AG04450 (cell line): ENCODE measurements at regions of chr11 and their contacts with region 1.

Region 1: DNA sequence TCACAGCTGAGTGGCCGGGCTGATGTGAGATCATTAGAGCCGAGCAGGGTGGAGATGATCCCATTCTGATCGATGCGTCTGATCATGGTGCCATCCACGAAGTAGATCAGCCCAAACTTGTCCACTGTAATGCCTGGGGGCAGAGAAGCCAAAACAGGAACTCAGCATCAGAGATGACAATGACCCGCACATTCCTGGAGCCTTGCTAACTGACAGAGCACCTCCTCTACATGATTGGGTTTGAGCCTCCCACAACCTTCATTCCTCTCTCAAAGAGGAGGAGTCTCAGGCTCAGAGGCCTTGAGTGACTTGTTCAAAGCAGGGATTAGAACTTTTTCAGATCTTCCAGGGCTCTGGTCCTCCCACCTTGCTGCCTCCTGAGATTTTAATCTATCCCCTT is 133.7 kb upstream of the NARS2 start:
- DNase-seq: no peak
- H3K4me3 ChIP-seq: no peak overlapping the region
- H3K27ac ChIP-seq: no peak overlapping the region
- H3K27me3 ChIP-seq: no peaks in the 10 kb centered on the region
- CTCF ChIP-seq: no peak

Region 2: DNA sequence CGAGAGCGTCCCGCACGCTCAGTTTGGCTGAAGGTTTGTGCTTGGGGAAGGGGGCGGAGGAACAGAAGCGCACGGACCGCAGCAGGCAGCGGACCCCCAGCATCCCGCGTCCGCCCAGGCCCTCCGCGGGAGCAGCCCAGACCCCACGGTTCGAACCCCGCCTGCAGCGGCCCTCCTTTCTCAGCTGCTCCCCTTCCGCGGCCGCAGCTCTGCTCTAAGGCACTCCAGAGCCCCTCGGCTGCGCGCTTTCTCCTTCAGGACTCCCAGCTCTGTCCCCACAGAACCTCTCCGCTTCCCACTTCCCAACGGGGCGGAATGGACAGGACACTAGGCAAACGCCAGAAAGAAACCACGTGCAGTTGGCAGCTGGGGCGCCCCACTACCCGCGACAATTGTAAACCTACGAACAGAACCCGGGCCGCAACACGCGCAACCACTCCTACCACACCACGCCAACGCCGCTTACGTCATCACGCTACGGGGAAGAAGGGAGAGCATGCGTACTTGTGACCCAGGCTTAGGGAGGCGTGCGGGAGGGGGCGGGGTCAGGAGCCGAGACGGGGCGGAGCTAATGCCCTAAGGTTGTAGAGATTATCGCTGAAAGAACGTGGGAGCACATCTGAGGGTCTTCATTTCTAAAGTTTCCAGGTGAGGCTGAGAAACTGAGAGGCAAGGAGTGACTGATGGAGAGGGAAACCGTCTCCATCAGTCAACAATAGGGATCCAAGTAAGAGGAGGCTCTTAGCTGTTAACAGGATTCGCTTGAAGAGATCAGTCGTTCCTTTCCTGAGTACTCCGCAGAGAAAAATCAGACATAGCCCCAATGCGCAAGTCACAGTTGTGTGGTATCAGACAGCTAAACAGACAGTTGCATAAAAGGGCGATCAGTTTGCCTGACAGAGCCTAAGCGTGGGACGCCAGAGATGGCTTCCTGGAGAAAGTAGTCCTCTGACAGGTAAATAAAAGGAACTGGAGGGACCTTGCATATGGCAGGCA is 133.7 kb before region 1 on chr11 and contains the start of gene NARS2:
- CTCF ChIA-PET with region 1: no interaction called
- POLR2A ChIA-PET with region 1: no interaction called
- DNase-seq: peak; percentile 84
- H3K4me3 ChIP-seq: peak within 1 kb of the TSS; percentile 87
- H3K27ac ChIP-seq: peak within 1 kb of the TSS; percentile 88
- H3K27me3 ChIP-seq: peaks cover 3% of the 10 kb centered on the region
- CTCF ChIP-seq: no peak
- polyA plus RNA-seq, gene NARS2: 10.6 and 18.4 TPM in 2 replicates

Region 3: DNA sequence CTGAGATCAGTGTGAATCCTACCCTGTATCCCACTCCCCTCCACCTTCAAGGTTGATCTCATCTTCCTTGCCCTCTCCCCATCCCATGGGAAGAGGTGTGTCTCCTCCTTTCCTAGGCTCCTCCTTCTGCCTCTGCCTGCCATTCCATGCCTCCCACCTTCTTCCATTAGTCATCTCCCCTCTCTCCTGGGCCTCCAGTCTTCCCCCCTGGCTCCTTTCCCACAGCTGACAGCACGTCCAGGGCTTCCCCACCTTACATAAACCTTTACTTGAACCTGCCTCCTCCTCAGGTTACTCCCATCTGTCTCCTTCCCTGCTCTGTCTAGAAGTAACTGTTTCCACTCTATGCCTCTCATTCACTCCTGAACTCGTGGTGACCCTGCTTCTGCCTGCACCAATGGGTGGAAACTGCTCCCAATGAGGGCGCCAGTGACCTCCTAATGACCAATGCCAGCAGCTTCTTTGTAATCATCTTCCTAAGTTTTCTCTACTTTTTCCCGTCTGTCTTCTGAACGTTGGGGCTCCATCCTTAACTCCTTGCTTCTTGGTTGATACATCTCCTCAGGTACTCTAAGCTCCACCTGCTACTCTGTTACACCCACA is 133.2 kb after region 1 on chr11:
- CTCF ChIA-PET with region 1: no interaction called
- POLR2A ChIA-PET with region 1: no interaction called
- DNase-seq: no peak
- H3K4me3 ChIP-seq: no peak overlapping the region
- H3K27ac ChIP-seq: peak overlapping the region; percentile 94
- H3K27me3 ChIP-seq: peaks cover 2% of the 10 kb centered on the region
- CTCF ChIP-seq: no peak

Region 4: GRCh38 chr11:78907636-78908035 is 199.3 kb after region 1 on chr11:
- CTCF ChIA-PET with region 1: interaction called, 11 read pairs
- POLR2A ChIA-PET with region 1: no interaction called
- DNase-seq: no peak
- H3K4me3 ChIP-seq: no peak overlapping the region
- H3K27ac ChIP-seq: no peak overlapping the region
- H3K27me3 ChIP-seq: no peaks in the 10 kb centered on the region
- CTCF ChIP-seq: no peak